ENCODE measurements at regions of chr5 and their contacts with region 1.

Region 1: GRCh38 chr5:131109540-131110255 is 55.4 kb downstream of the HINT1 start:
- DNase-seq: peak in 1 of 10 donors; percentile 26
- H3K4me3 ChIP-seq: no peak overlapping the region
- H3K27ac ChIP-seq: peak overlapping the region in 46 of 59 donors; percentile 4 to 77 (median 52)
- H3K27me3 ChIP-seq: no peaks in the 10 kb centered on the region
- CTCF ChIP-seq: peak; percentile 68 to 97 (median 85)

Region 2: DNA sequence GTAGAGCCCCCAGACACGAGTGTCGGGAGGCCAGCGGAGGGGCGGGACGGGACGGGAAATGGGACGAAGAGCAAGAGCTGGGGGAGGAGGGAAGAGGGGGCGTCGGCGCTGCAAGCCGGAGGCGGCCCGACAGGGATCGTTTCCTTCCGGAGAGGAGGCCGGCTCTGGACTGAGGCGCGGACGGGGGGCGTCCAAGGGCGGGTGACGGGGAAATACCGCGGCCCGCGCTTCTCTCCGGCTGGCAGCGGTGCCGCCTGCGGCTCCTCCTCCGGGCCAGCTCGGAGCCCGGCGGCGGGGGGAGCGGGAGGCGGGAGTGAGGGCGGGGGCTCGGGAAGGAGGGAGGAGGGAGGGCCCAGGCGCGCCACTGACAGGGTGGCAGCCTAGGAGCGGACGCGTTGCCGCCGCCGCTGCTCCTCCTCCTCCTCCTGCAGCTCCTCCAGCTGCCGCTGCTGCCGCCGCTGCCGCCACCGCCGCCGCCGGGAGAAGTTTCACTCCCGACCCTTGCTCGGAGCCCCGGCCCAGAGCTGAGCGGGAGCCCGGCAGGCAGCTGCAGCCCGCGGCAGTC is 1205.5 kb before region 1 on chr5 and contains the start of gene CHSY3:
- intact Hi-C with region 1: loop called in 1 of 2 experiments (anchors 5 kb)
- DNase-seq: peak; percentile 39 to 92 (median 84)
- H3K4me3 ChIP-seq: peak within 1 kb of the TSS; percentile 59 to 90 (median 78)
- H3K27ac ChIP-seq: peak within 1 kb of the TSS in 57 of 59 donors; percentile 29 to 92 (median 79)
- H3K27me3 ChIP-seq: no peaks in the 10 kb centered on the region
- CTCF ChIP-seq: peak in 31 of 56 donors; percentile 10 to 60 (median 28)
- total RNA-seq, gene CHSY3: 3.7 to 18.6 (median 11.0) TPM

Region 3: GRCh38 chr5:130112246-130112645 is 997.5 kb before region 1 on chr5:
- intact Hi-C with region 1: loop called in 1 of 2 experiments (anchors 10 kb)
- DNase-seq: no peak
- H3K4me3 ChIP-seq: no peak overlapping the region
- H3K27ac ChIP-seq: no peak overlapping the region
- H3K27me3 ChIP-seq: no peaks in the 10 kb centered on the region
- CTCF ChIP-seq: no peak

Region 4: DNA sequence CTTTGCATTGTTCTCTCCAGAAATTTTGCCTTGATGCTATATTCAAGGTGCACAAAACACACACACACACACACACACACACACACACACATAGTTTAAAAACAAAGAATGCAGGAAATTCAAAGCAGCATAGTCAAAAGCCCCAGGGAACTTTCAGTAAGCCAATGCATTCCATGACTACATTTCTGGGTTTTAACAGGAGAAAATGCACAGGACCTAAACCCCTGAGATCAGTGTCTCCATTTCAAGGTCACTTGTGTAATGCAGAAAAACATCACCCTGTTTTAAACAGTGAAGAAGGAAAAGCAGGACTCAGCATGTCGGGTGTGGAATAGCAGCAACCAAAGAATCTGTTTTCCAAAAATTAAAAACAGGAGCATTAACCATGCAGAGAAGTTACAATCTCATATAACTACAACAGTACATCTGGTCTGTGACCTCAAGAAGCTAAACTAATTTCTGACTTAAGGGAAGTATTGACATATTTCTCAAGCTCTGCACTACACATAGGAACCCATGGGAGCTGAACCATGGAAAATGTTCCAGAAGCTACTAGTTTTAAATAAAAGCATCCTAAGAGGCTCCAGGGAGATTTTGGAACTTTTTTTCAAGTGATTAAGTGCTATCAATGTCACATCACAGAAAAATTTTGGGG is 241.4 kb before region 1 on chr5:
- intact Hi-C with region 1: loop called in 1 of 2 experiments (anchors 10 kb)
- DNase-seq: no peak
- H3K4me3 ChIP-seq: no peak overlapping the region
- H3K27ac ChIP-seq: no peak overlapping the region
- H3K27me3 ChIP-seq: no peaks in the 10 kb centered on the region
- CTCF ChIP-seq: no peak

Region 5: DNA sequence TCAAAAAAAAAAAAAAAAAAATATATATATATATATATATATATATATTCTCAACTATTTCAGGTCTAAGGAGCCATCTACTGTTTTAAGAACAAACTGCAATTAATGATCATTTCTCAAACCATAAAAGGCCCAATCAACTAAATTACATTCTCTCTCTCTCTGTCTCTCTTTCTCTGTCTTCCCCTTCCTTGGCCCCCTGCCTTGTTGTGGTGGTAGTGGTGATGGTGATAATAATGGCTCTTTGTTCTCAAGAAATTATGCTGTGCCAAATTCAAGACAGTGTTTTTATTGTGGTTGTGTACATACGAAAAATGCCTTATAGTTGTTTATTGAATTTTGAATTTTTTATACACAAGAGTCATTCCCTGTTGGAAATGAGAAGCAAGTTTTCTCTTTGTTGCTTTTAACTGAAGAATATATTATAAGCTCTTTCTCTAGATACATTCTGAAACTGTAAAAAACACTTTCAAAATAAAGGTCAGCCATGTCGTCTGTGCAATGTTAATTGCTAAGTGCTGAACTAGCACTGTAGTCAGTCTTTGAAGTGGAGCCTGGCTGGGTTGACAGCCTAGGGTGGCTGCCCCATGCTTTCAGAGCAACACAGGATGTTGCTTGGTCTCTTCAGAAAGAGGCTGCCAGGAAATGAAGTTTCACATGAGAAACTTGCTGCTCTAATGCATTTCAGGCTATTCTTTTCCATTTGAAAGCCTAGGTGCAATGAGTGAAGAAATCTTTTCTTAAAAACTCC is 40.6 kb before region 1 on chr5:
- intact Hi-C with region 1: loop called in 1 of 2 experiments (anchors 5 kb)
- DNase-seq: peak in 8 of 10 donors; percentile 23 to 76 (median 58)
- H3K4me3 ChIP-seq: peak overlapping the region in 24 of 59 donors; percentile 1 to 53 (median 24)
- H3K27ac ChIP-seq: peak overlapping the region; percentile 53 to 97 (median 88)
- H3K27me3 ChIP-seq: no peaks in the 10 kb centered on the region
- CTCF ChIP-seq: peak in 36 of 56 donors; percentile 5 to 54 (median 28)

Measured in dorsolateral prefrontal cortex (tissue), 120 donors.